ENCODE measurements at regions of chr2 and their contacts with region 1.

Region 1: DNA sequence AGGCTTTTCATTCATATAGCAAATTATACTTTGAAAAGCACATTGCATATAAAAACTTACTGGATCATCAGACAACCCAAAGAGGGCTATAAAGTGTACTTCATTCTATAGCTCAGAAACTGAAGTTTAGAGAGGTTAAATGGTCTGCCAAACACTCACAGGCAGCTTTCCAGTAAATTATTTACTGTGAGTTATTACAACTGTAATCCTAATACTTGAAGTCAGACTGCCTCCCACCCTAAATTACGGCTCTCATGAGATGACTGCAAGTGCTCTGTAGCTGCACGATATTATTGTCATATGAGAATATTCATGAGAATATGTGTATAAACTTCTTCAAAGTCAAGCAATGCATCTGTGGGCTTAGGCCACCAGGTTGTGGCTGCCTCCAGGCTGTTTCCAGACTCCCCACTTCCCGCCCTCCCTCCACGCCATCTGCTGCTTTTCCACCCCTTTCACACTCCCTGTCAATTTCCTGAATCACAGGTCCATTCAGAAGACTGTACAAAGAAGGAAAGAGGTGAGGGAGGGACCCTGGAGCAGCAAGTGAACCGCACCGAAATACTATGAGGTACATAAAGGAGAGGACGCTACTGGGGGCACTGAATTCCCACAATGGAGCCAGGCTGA is 111.1 kb upstream of the SPOPL start:
- DNase-seq: no peak
- H3K4me3 ChIP-seq: no peak overlapping the region
- H3K27ac ChIP-seq: no peak overlapping the region
- H3K4me1 ChIP-seq: no peaks in the 10 kb centered on the region; a peak in 1 of 4 replicates
- H3K27me3 ChIP-seq: no peaks in the 10 kb centered on the region
- CTCF ChIP-seq: no peak
- EP300 ChIP-seq: no peak
- RAD21 ChIP-seq: no peak

Region 2: DNA sequence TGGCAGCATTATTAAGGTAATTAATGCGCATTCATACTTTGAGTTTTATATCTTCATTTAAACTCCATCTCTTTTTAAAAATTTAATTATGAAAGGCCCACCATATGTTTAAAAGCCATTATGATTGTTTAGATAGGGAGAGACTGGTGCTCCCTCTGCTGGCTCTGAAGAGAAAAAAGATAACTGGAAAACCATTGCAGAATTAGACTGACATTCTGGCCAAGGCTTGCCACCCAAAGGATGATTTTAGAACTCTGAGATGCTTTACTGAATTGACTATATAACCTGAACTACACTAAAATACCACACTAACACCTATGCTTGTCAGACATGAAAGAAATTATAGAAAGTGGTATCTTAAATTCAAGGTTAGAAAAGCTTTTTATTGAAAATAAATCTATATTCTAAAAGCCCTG is 16.4 kb before region 1 on chr2:
- CTCF ChIA-PET with region 1: interaction called, 15 read pairs
- POLR2A ChIA-PET with region 1: no interaction called
- DNase-seq: peak; percentile 36
- H3K4me3 ChIP-seq: no peak overlapping the region
- H3K27ac ChIP-seq: no peak overlapping the region
- H3K4me1 ChIP-seq: no peaks in the 10 kb centered on the region; a peak in 1 of 4 replicates
- H3K27me3 ChIP-seq: no peaks in the 10 kb centered on the region
- CTCF ChIP-seq: peak; percentile 92
- EP300 ChIP-seq: no peak
- RAD21 ChIP-seq: peak; percentile 81

Measured in SK-N-SH (cell line).